ENCODE measurements at regions of chr21 and their contacts with region 1.

Region 1: GRCh38 chr21:46635324-46636172 is at the start of gene PRMT2:
- DNase-seq: peak; percentile 97
- H3K4me3 Mint-ChIP-seq: peak within 1 kb of the TSS; percentile 86
- H3K27ac Mint-ChIP-seq: peak within 1 kb of the TSS; percentile 93
- H3K4me1 Mint-ChIP-seq: peaks cover 68% of the 10 kb centered on the region
- H3K27me3 Mint-ChIP-seq: no peaks in the 10 kb centered on the region
- total RNA-seq, gene PRMT2: 78.5 to 81.1 TPM

Region 2: GRCh38 chr21:46458315-46459023 is 177.1 kb before region 1 on chr21 and contains the start of gene DIP2A:
- CTCF ChIA-PET with region 1: no interaction called
- intact Hi-C with region 1: loop called (anchors 1 kb)
- DNase-seq: peak; percentile 94
- H3K4me3 Mint-ChIP-seq: peak within 1 kb of the TSS; percentile 83
- H3K27ac Mint-ChIP-seq: peak within 1 kb of the TSS; percentile 86
- H3K4me1 Mint-ChIP-seq: peaks cover 36% of the 10 kb centered on the region
- H3K27me3 Mint-ChIP-seq: no peaks in the 10 kb centered on the region
- total RNA-seq, gene DIP2A: 31.4 to 32.7 TPM

Region 3: GRCh38 chr21:46559291-46559983 is 76.1 kb before region 1 on chr21:
- CTCF ChIA-PET with region 1: interaction called, 3 read pairs
- intact Hi-C with region 1: loop called (anchors 1 kb)
- DNase-seq: peak; percentile 77
- H3K4me3 Mint-ChIP-seq: peak overlapping the region; percentile 85
- H3K27ac Mint-ChIP-seq: peak overlapping the region; percentile 98
- H3K4me1 Mint-ChIP-seq: peaks cover 59% of the 10 kb centered on the region
- H3K27me3 Mint-ChIP-seq: no peaks in the 10 kb centered on the region

Region 4: DNA sequence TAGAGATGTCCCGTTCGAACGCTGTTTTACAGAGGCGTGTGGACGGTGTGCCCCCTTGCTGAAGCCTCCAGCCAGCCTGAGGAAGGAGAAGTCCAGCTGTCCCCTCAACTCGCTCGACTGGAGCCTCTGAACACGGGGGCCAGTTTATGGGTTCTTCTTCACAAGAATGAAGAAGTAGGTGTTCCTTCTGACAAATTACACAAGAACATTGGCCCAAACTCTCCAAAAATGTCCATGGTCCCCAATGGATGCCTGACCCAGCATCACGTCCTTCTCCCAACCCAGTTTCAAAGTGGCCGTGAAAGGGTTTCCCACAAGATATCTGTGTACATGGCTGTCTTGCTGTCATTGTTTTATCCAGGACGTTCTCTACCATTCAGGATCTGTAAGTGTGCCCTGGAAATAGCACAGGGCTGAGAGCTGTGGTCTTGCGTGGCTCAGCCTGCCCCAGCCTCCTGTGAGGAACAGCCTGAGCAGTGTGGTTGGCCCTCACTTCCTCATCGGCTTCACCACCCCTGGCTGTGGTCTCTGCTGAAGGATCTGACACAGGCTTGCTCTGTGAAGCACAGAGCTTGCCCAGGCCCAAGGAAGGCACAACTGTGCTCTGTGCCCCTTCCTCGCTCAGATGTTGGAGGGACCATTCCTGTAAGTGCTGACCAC is 29.7 kb before region 1 on chr21:
- CTCF ChIA-PET with region 1: interaction called, 4 read pairs
- intact Hi-C with region 1: loop called (anchors 1 kb)
- DNase-seq: peak; percentile 55
- H3K4me3 Mint-ChIP-seq: no peak overlapping the region
- H3K27ac Mint-ChIP-seq: peak overlapping the region; percentile 39
- H3K4me1 Mint-ChIP-seq: peaks cover 33% of the 10 kb centered on the region
- H3K27me3 Mint-ChIP-seq: no peaks in the 10 kb centered on the region

Region 5: GRCh38 chr21:46622226-46622625 is 13.3 kb before region 1 on chr21:
- CTCF ChIA-PET with region 1: interaction called, 5 read pairs
- intact Hi-C with region 1: loop called (anchors 1 kb)
- DNase-seq: peak; percentile 51
- H3K4me3 Mint-ChIP-seq: peak overlapping the region; percentile 44
- H3K27ac Mint-ChIP-seq: peak overlapping the region; percentile 80
- H3K4me1 Mint-ChIP-seq: peaks cover 52% of the 10 kb centered on the region
- H3K27me3 Mint-ChIP-seq: no peaks in the 10 kb centered on the region

Region 6: DNA sequence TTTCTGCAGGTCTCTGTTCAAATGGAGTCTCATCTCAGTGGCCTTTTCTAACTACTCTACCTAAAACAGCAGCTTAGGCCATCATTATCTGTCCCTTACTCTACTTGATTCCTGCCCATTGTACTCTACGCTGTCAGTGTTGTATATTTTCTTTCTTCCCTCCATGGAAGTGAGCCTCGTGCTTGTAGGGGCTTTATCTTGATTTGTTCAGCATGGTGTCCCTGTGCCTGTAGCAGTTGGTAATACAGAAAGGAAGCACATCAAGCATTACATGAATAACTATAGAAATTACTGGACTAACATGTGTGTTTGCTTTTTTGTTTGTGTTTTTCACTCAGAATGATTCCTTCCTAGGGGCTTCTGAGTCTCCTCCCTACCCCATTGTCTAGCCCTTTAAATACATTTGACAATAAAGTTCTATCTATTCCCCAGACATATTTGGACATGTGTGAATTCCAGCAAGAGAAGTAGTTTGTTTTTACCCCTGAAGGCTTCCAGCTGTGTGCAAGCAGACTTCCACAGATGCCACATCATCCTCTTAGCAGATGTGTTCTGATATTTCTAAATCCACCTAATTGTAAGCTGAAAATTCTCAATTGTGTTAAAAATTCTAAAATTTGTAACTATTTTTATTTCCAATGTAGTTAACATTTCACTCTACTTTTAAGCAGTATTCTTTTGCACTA is 40.2 kb after region 1 on chr21:
- CTCF ChIA-PET with region 1: no interaction called
- intact Hi-C with region 1: no loop called
- DNase-seq: no peak
- H3K4me3 Mint-ChIP-seq: no peak overlapping the region
- H3K27ac Mint-ChIP-seq: no peak overlapping the region
- H3K4me1 Mint-ChIP-seq: no peaks in the 10 kb centered on the region
- H3K27me3 Mint-ChIP-seq: no peaks in the 10 kb centered on the region